Caco-2 (cell line): ENCODE measurements at regions of chr6 and their contacts with region 1.

Region 1: DNA sequence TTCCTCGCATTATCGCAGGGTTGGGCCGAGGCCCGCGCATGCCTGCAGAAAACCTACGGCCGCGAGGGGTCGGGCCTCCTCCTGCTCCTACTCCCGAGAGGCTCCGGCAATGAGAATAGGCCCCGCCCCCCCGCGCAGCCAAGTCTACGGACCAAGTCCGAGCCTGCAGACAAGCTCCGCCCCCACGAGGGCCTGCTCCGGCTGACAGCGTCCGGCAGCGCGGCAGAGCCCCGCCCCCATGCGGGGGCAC is 3.1 kb upstream of the GPSM3 start:
- DNase-seq: peak; percentile 100
- H3K4me3 ChIP-seq: peak overlapping the region; percentile 95
- H3K4me3 Mint-ChIP-seq: peak overlapping the region; percentile 94
- H3K27ac Mint-ChIP-seq: peak overlapping the region; percentile 99
- H3K4me1 ChIP-seq: peaks cover 15% of the 10 kb centered on the region
- H3K4me1 Mint-ChIP-seq: peaks cover 16% of the 10 kb centered on the region
- H3K27me3 ChIP-seq: no peaks in the 10 kb centered on the region
- H3K27me3 Mint-ChIP-seq: no peaks in the 10 kb centered on the region
- CTCF ChIP-seq: peak; percentile 17 to 70

Region 2: GRCh38 chr6:31597006-31597405 is 598.6 kb before region 1 on chr6:
- CTCF ChIA-PET with region 1: no interaction called
- POLR2A ChIA-PET with region 1: interaction called, 11 read pairs
- intact Hi-C with region 1: no loop called
- DNase-seq: peak in 1 of 2 experiments; percentile 52
- H3K4me3 ChIP-seq: no peak overlapping the region
- H3K4me3 Mint-ChIP-seq: no peak overlapping the region
- H3K27ac Mint-ChIP-seq: no peak overlapping the region
- H3K4me1 ChIP-seq: no peaks in the 10 kb centered on the region
- H3K4me1 Mint-ChIP-seq: peaks cover 5% of the 10 kb centered on the region
- H3K27me3 ChIP-seq: no peaks in the 10 kb centered on the region
- H3K27me3 Mint-ChIP-seq: no peaks in the 10 kb centered on the region
- CTCF ChIP-seq: peak; percentile 34 to 38

Region 3: GRCh38 chr6:32118782-32119628 is 76.6 kb before region 1 on chr6:
- CTCF ChIA-PET with region 1: interaction called, 15 read pairs
- POLR2A ChIA-PET with region 1: interaction called, 3 read pairs
- intact Hi-C with region 1: loop called (anchors 2 kb)
- DNase-seq: peak; percentile 86 to 91
- H3K4me3 ChIP-seq: no peak overlapping the region
- H3K4me3 Mint-ChIP-seq: peak overlapping the region; percentile 60
- H3K27ac Mint-ChIP-seq: peak overlapping the region; percentile 77
- H3K4me1 ChIP-seq: peaks cover 4% of the 10 kb centered on the region
- H3K4me1 Mint-ChIP-seq: peaks cover 16% of the 10 kb centered on the region
- H3K27me3 ChIP-seq: no peaks in the 10 kb centered on the region
- H3K27me3 Mint-ChIP-seq: no peaks in the 10 kb centered on the region
- CTCF ChIP-seq: peak; percentile 89 to 95

Region 4: DNA sequence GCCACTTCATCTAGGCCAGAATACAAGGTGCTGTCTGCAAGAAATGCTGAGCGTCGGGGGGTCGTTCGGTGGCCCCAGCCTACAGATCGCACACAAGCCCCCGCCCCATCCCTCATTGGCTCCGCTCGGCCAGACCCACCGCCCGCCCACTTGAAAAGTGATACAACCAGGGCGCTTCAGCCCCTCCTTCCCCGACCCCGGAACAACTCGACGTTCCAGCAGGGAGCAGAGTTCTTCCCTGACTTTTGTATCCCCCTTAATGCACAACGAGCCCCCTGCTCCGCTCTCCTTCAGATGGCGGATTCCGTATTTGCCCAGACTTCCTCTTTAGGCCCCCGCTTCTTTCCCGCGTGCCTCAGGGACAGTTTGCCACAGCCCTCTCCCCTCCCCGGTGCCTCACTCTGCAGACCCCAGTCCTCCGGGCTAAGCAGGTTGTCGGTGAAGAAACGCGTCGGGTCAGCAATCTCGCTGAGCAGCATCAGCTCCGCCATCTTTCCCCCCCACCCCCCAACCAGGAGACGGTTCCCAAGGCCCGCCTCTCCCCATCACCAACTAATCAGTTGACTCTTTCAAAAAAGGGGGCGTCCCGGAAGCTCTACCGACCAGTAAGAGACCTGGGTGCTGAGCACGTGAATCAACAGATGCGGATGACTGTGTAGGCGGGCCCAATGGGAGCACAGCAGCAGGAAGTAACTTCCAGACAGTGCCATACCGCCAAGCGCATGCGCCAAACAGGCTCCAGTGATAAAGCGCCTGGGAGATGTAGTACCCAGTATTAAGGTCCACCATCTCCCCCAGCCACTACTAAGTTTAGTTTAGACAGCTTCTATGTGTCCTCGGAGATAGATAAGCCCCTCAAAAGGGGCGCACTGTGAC is 67.6 kb before region 1 on chr6 and contains the start of gene ATF6B:
- CTCF ChIA-PET with region 1: interaction called, 6 read pairs
- POLR2A ChIA-PET with region 1: interaction called, 13 read pairs
- intact Hi-C with region 1: no loop called
- DNase-seq: peak; percentile 96 to 99
- H3K4me3 ChIP-seq: peak within 1 kb of the TSS; percentile 75
- H3K4me3 Mint-ChIP-seq: peak within 1 kb of the TSS; percentile 99
- H3K27ac Mint-ChIP-seq: peak within 1 kb of the TSS; percentile 99
- H3K4me1 ChIP-seq: peaks cover 17% of the 10 kb centered on the region
- H3K4me1 Mint-ChIP-seq: peaks cover 26% of the 10 kb centered on the region
- H3K27me3 ChIP-seq: no peaks in the 10 kb centered on the region
- H3K27me3 Mint-ChIP-seq: no peaks in the 10 kb centered on the region
- CTCF ChIP-seq: no peak
- total RNA-seq, gene ATF6B: 61.5 and 64.9 TPM in 2 replicates

Region 5: DNA sequence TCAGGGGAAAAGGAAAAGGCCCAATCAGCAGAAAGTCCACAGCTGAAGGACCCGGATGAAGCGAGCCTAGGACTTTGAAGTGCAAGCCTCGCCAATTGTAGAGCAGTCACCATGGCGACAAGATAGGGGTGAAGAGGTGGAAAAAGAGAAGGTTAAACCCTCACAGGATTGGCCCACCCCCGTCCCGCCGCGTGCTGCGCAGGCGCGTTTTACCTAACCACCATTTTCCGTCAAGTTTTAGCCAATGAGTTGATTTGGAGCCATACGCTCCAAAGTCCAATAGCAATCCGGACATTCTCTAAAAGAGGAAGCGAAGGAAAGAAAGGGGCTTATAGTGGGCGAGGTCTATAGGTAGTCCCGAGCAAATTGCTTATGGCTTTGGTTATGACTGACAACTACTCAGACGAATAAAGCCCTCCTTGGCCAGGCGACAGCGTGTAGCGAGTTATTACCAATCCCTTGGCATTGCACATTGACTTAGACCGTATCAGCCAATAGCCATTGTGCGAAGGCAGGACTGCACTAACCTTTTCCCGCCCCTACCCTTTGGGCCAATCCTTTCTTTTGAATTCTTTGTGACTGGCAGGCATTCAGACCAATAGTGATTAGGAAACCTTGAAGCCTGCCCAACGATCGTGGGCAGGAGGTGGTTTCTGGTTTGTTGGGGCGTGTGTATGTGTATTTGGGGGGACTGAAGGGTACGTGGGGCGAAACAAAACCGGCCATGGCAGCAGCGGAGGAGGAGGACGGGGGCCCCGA is 17.6 kb before region 1 on chr6 and contains the start of gene RNF5:
- CTCF ChIA-PET with region 1: interaction called, 24 read pairs
- POLR2A ChIA-PET with region 1: interaction called, 29 read pairs
- intact Hi-C with region 1: loop called (anchors 1 kb)
- DNase-seq: peak; percentile 97 to 99
- H3K4me3 ChIP-seq: peak within 1 kb of the TSS; percentile 87
- H3K4me3 Mint-ChIP-seq: peak within 1 kb of the TSS; percentile 81
- H3K27ac Mint-ChIP-seq: peak within 1 kb of the TSS; percentile 94
- H3K4me1 ChIP-seq: peaks cover 15% of the 10 kb centered on the region
- H3K4me1 Mint-ChIP-seq: peaks cover 46% of the 10 kb centered on the region
- H3K27me3 ChIP-seq: no peaks in the 10 kb centered on the region
- H3K27me3 Mint-ChIP-seq: no peaks in the 10 kb centered on the region
- CTCF ChIP-seq: no peak
- total RNA-seq, gene RNF5: 64.7 and 70.7 TPM in 2 replicates